Sciatic nerve (tissue), 2 donors: ENCODE measurements at regions of chr11 and their contacts with region 1.

Region 1: DNA sequence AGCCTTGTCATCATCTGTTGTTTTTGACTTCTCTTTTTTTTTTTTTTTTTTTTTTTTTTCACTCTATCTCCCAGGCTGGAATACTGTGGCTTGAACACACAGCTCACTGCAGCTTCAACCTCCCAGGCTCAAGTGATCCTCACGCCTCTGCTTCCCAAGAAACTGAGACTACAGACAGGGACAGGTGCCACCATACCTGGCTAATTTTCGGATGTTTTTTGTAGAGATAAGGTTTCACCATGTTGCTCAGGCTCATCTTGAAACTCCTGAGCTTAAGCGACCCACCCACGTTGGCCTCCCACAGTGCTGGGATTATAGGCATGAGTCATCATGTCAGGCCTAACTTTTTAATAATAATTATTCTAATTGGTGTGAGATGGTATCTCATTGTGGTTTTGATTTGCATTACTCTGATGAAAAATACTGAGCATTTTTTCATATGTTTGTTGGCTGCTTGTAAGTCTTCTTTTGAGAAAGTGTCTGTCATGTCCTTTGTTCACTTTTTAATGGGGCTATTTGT is 51.3 kb upstream of the OR9G4 start:
- DNase-seq: no peak
- ATAC-seq: no peak

Region 2: GRCh38 chr11:56776809-56777208 is 22.9 kb before region 1 on chr11:
- intact Hi-C with region 1: loop called (anchors 1 kb)
- DNase-seq: no peak
- ATAC-seq: no peak